ENCODE measurements at regions of chr12 and their contacts with region 1.

Region 1: GRCh38 chr12:52278541-52279421 is 4.3 kb downstream of the KRT86 start:
- H3K4me3 ChIP-seq: no peak overlapping the region
- H3K27ac ChIP-seq: no peak overlapping the region
- H3K4me1 ChIP-seq: no peaks in the 10 kb centered on the region; the same call in 1 of the 2 replicates
- CTCF ChIP-seq: peak; percentile 81

Region 2: GRCh38 chr12:52087961-52088820 is 190.6 kb before region 1 on chr12:
- CTCF ChIA-PET with region 1: no interaction called
- POLR2A ChIA-PET with region 1: no interaction called
- H3K4me3 ChIP-seq: no peak overlapping the region
- H3K27ac ChIP-seq: no peak overlapping the region
- H3K4me1 ChIP-seq: no peaks in the 10 kb centered on the region
- CTCF ChIP-seq: no peak

Region 3: DNA sequence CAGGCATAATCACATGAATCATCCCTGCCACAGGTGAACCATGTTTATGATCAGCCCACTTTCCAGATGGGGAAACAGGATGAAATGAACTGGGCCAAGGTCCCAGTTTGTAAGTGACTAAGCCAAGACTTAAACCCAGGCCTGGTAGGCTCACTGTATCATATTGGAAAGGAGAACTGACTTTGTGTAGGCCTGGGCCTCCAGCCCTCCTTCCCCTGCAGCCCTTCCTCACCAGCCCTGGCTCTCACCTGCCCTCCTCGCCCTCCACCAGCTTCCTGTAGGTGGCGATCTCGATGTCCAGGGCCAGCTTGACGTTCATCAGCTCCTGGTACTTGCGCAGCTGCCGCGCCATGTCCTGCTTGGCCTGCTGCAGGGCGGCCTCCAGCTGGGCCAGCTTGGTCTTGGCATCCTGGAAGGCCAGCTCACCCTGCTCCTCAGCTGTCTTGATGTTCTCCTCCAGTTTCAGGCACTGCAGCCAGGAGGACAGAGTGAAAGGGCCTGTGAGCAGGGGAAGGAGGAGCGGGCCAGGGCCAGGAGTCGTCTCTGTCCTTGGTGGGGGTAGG is 106.8 kb before region 1 on chr12:
- CTCF ChIA-PET with region 1: interaction called, 13 read pairs
- POLR2A ChIA-PET with region 1: no interaction called
- H3K4me3 ChIP-seq: no peak overlapping the region
- H3K27ac ChIP-seq: no peak overlapping the region
- H3K4me1 ChIP-seq: no peaks in the 10 kb centered on the region
- CTCF ChIP-seq: peak; percentile 45

Region 4: GRCh38 chr12:52207895-52208294 is 70.9 kb before region 1 on chr12:
- CTCF ChIA-PET with region 1: interaction called, 56 read pairs
- POLR2A ChIA-PET with region 1: interaction called, 3 read pairs
- H3K4me3 ChIP-seq: no peak overlapping the region
- H3K27ac ChIP-seq: no peak overlapping the region
- H3K4me1 ChIP-seq: peaks cover 8% of the 10 kb centered on the region; the same call in 1 of the 2 replicates
- CTCF ChIP-seq: no peak

Region 5: DNA sequence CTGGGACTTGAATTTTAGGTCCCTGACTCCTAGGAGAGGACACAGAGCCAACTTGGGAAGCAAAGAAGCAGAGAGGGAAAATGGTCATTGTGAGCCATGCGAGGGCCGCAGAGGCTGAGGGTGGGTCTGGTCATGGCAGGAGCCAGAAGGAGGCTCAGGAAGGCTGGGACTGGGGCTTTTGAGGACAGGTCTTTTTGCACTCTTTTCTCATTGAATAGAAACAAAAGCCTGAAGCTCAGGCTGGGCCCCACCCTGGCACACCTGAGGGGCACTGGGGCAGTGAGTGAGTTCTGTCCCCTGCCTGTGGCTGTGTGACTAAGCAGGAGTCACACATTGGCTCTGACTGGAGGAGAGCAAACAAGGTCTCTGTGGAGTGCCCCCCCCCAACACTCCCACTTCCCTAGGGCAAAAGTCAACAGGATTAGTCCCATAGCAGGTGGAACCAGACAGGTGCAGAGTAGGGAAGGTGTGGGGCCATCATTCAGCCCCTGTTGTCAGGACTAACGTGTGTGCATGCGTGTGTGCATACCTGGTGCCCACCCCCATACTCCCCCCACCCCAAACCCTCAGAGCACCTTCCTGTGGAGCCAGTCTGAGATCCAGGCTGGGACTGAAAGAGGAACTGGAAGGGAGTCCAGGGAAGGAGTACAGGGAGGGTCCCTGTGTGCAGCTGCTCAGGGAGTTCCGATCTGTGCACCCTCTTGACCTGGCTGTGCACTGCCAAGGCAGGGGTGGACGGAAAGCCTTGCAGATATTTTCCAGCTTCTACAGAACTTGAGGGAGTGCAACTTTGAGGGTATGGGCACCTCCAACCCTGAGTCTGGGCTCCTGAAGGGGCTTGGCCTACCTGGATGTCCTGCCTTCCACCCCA is 42.7 kb before region 1 on chr12:
- CTCF ChIA-PET with region 1: interaction called, 14 read pairs
- POLR2A ChIA-PET with region 1: no interaction called
- H3K4me3 ChIP-seq: no peak overlapping the region
- H3K27ac ChIP-seq: no peak overlapping the region
- H3K4me1 ChIP-seq: no peaks in the 10 kb centered on the region
- CTCF ChIP-seq: no peak

Region 6: DNA sequence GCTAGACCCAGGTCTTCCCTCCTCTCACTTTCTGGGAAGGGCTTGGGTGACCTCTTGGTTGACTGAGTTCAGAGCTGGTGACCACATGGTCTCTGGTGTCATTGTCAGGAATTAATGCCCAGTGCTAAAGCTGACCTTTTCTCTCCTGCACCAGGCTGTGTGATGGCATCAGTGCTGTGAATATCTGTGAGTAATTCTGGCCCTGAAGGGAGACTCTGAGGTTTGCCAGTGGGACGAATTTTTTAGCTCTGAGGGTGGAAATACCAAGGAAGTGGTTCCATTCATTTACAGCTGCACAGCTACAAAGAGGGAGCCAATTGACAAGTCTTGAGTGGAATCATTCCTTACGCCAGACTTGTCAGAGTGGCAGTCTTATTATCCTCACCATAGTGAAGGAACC is 10.6 kb before region 1 on chr12:
- CTCF ChIA-PET with region 1: interaction called, 98 read pairs
- POLR2A ChIA-PET with region 1: interaction called, 4 read pairs
- H3K4me3 ChIP-seq: no peak overlapping the region
- H3K27ac ChIP-seq: no peak overlapping the region
- H3K4me1 ChIP-seq: no peaks in the 10 kb centered on the region
- CTCF ChIP-seq: no peak

Region 7: DNA sequence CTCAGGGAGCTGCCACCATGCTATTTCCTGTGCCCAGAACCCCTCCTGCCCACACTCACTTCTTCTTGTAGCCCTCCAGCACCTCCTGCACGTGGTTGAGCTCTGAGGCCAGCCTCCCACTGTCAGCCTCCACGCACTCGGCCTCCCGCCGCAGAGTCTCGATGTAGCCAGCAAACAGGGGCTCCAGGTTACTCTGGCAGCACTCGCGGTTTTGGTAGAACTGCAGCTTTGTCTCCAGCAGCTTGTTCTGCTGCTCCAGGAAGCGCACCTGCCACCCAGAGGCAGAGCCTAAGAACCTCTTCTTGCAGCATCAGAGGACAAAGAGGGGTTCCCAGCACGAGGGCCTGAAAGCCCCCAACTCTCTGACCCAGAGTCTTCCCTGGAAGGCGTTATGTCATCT is 40.3 kb after region 1 on chr12:
- CTCF ChIA-PET with region 1: interaction called, 12 read pairs
- POLR2A ChIA-PET with region 1: interaction called, 5 read pairs
- H3K4me3 ChIP-seq: no peak overlapping the region
- H3K27ac ChIP-seq: no peak overlapping the region
- H3K4me1 ChIP-seq: no peaks in the 10 kb centered on the region
- CTCF ChIP-seq: no peak

Measured in HEK293 (cell line).